GM12878 (cell line): ENCODE measurements at regions of chr15 and their contacts with region 1.

Region 1: GRCh38 chr15:40847205-40847961 is 3.5 kb downstream of the SPINT1 start:
- DNase-seq: peak; percentile 57
- ATAC-seq: peak; percentile 82
- H3K4me3 ChIP-seq: peak overlapping the region; percentile 45; the same call in 1 of the 2 replicates
- H3K27ac ChIP-seq: peak overlapping the region; percentile 76
- H3K4me1 ChIP-seq: peaks cover 26% of the 10 kb centered on the region
- H3K27me3 ChIP-seq: peaks cover 1 to 3% of the 10 kb centered on the region in 2 experiments; a peak in 1 of 4 replicates
- CTCF ChIP-seq: no peak
- EP300 ChIP-seq: no peak
- POLR2A ChIP-seq: no peak
- RAD21 ChIP-seq: no peak

Region 2: GRCh38 chr15:40493089-40493840 is 354.1 kb before region 1 on chr15:
- CTCF ChIA-PET with region 1: no interaction called
- POLR2A ChIA-PET with region 1: no interaction called
- RAD21 ChIA-PET with region 1: no interaction called
- SMC1A ChIA-PET with region 1: no interaction called
- in situ Hi-C with region 1: no loop called
- intact Hi-C with region 1: no loop called
- DNase-seq: no peak
- ATAC-seq: peak; percentile 86
- H3K4me3 ChIP-seq: no peak overlapping the region
- H3K27ac ChIP-seq: no peak overlapping the region
- H3K4me1 ChIP-seq: no peaks in the 10 kb centered on the region
- H3K27me3 ChIP-seq: no peaks in the 10 kb centered on the region; a peak in 1 of 4 replicates
- CTCF ChIP-seq: no peak
- EP300 ChIP-seq: no peak
- POLR2A ChIP-seq: no peak
- RAD21 ChIP-seq: no peak

Region 3: GRCh38 chr15:40807028-40807887 is 40.1 kb before region 1 on chr15 and contains the starts of genes DNAJC17 and ZFYVE19:
- CTCF ChIA-PET with region 1: interaction called, 6 read pairs
- POLR2A ChIA-PET with region 1: interaction called, 9 read pairs
- RAD21 ChIA-PET with region 1: interaction called, 7 read pairs
- SMC1A ChIA-PET with region 1: interaction called, 7 read pairs
- in situ Hi-C with region 1: no loop called
- intact Hi-C with region 1: loop called (anchors 5 kb)
- DNase-seq: peak; percentile 93
- ATAC-seq: peak; percentile 97
- H3K4me3 ChIP-seq: peak within 1 kb of the TSS; percentile 79
- H3K27ac ChIP-seq: peak within 1 kb of the TSS; percentile 98
- H3K4me1 ChIP-seq: peaks cover 15% of the 10 kb centered on the region; the same call in 1 of the 2 replicates
- H3K27me3 ChIP-seq: no peaks in the 10 kb centered on the region
- CTCF ChIP-seq: peak in 1 of 3 experiments; percentile 20; a peak in 1 of 6 replicates
- EP300 ChIP-seq: no peak
- POLR2A ChIP-seq: peak; percentile 90
- RAD21 ChIP-seq: no peak
- polyA plus RNA-seq, gene DNAJC17: 6.1 to 11.5 TPM
- polyA plus RNA-seq, gene ZFYVE19: 1.7 to 4.4 TPM